GM10248 (cell line): ENCODE measurements at regions of chr5 and their contacts with region 1.

Region 1: DNA sequence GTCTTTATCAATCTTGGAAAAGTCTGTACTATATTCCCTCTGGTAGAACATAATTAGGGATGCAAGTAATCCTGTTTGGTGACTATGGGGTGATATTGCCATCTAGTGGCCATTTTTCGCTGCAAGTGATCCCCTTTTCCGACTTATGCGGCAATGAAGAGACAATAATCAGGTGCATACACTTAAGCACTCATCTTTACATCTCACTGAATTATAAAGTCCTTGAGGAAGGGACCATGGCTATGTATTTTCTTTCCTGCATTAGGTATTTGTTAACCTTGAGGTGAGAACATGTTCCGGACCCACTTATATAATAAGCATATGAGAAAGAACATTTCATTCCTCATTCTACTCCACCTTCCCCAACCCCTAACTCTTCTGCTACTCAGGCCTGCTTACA is 19.6 kb upstream of the LIX1 start:
- DNase-seq: peak; percentile 15
- CTCF ChIP-seq: peak; percentile 80

Region 2: GRCh38 chr5:96763026-96763425 is 399.0 kb before region 1 on chr5:
- CTCF ChIA-PET with region 1: interaction called, 24 read pairs
- POLR2A ChIA-PET with region 1: no interaction called
- DNase-seq: no peak
- CTCF ChIP-seq: no peak

Region 3: DNA sequence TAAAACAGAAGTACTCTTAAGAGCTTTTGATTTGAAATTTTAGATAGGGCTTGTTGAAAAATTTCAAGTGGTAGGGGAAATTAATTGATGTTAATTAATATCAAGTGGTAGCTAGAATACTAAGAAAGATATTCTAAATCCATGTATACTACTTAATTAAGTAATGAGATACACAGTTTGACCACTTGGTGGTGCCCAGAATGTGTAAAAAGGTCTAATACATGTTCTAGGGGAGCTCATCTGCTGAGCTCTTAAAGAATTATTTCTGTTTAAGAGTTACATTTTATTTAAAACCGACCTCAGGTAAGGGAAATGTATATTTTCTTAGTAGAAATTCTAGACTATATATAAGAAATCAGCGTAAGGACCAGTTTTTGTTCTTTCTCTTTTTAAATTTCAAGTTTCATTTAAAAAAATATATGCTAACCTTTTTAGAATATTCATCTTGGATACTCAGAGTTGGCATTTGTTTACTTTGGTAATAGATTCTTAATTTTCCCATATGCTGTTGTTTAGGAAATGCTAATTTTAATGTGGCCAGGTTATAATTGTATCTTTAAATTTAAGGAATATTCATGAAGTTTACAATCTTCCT is 164.7 kb before region 1 on chr5:
- CTCF ChIA-PET with region 1: interaction called, 36 read pairs
- POLR2A ChIA-PET with region 1: no interaction called
- DNase-seq: peak; percentile 13
- CTCF ChIP-seq: peak; percentile 26

Region 4: GRCh38 chr5:97044052-97044451 is 118.0 kb before region 1 on chr5:
- CTCF ChIA-PET with region 1: interaction called, 23 read pairs
- POLR2A ChIA-PET with region 1: no interaction called
- DNase-seq: no peak
- CTCF ChIP-seq: peak; percentile 25

Region 5: DNA sequence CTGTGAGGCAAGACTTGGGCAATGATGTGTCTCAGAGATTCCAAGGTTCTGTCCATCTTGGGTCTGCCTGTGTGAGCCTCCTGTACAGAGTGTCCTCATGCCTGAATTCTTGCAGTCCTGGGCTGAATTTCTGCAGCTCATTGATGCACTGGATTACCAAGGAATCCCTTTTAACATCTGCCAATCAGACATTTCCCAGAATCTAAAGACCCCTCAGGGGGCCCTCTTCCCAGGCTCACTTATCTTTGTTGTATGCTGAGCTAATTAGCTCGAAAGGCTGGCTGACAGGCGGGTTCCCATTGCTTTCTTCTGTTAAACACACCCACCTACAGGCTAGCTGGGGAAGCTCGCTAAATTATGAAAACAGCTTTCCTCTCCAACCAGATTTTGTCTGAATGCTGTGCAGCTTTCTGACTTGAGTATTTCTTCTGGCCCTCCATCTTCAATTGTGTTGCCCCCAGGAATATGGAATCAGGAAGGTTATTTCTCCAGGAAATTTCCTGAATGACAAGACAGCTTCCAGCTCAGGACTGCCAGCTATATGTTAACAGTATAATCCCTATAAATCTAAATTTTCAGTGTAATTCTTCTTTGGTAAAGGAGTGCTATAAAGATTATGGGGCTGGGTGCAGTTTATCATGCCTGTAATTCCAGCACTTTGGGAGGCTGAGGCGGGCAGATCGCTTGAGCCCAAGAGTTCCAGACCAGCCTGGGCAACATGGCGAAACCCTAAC is 19.4 kb before region 1 on chr5 and contains the start of gene LIX1:
- CTCF ChIA-PET with region 1: interaction called, 79 read pairs
- POLR2A ChIA-PET with region 1: no interaction called
- DNase-seq: peak; percentile 48
- CTCF ChIP-seq: peak; percentile 63

Region 6: DNA sequence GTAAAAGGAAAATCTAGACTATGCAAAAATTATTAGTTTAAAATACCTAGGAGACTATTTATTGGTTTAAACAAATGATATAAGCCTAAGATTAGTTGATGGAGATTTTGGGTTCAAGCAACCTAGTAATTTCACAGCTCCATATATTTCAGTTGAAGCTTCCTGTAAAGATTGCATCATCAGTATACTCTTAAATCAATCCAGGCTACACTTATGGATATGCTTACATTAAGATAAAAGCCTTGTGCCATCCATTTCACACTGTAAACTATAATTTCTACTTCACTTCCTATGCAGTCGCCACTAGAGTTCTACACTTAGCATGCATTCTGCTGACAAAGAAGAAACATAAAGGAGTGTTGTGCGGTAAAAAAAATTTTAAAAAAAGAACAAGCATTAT is 12.3 kb before region 1 on chr5:
- CTCF ChIA-PET with region 1: interaction called, 79 read pairs
- POLR2A ChIA-PET with region 1: no interaction called
- DNase-seq: no peak
- CTCF ChIP-seq: no peak